Calu3 (cell line): ENCODE measurements at regions of chr13 and their contacts with region 1.

Region 1: DNA sequence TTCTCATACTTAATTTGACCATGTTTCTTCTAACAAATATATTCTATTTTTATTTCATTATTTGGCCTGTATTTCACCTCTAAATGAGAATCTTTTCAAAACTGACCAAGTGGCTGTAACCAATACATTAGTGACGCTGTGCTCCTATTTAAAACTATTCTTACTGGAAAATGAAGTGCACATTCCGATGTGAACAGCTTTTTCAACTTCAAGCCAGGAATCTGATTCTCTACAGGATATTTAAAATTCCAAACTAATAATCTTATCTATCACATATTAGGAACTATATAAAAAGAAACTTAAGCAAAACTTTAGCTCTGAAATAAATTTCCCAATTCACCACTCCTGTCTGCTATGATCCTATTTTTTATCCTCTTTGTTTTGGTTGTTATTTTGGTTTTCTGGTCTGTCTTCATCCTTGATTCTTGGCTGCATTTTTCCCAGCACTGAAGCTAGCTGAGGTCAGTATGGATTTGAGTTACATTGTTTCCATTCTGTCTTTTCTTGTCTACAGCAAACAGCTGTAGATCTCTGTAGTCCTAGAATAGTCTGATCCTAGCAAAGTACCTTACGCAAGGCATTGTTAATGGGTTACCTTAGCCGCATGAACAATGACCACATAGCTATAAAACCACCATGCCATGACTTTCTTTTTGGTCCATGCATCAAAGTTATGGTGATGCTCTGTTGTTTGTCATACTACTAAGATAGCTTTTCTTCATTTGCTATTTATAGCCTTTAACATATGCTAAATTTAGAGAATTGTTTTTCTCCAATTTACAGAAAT is 748.6 kb upstream of the SPRY2 start:
- DNase-seq: no peak
- H3K4me3 Mint-ChIP-seq: no peak overlapping the region
- H3K27ac Mint-ChIP-seq: no peak overlapping the region
- H3K4me1 Mint-ChIP-seq: no peaks in the 10 kb centered on the region
- H3K27me3 Mint-ChIP-seq: no peaks in the 10 kb centered on the region
- CTCF ChIP-seq: no peak

Region 2: DNA sequence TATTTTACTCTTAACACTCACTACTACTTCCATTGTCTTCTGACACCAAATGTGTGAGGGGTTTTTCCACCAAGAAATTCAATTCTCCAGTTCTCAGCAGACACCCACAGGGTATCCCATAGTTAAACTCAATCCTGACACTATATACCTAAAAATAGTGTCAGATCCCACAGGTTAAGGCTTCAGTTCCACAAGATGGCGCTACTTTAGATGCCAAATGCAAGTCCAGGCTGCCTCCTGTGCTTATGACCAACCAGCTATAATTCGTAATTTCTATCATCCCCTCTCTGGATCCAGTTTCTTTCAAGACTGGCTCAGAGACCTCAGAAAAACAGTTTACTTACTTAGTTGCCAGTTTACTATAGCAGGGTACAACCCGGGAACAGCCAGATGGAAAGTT is 397.6 kb after region 1 on chr13:
- CTCF ChIA-PET with region 1: no interaction called
- intact Hi-C with region 1: loop called (anchors 10 kb)
- DNase-seq: peak; percentile 0
- H3K4me3 Mint-ChIP-seq: no peak overlapping the region
- H3K27ac Mint-ChIP-seq: no peak overlapping the region
- H3K4me1 Mint-ChIP-seq: no peaks in the 10 kb centered on the region
- H3K27me3 Mint-ChIP-seq: no peaks in the 10 kb centered on the region
- CTCF ChIP-seq: no peak